ENCODE measurements at regions of chrX and their contacts with region 1.

Region 1: GRCh38 chrX:24081661-24082264 is 27.0 kb downstream of the EIF2S3 start:
- DNase-seq: peak; percentile 45 to 57 (median 56)
- ATAC-seq: peak; percentile 74 to 89 (median 82)
- H3K4me3 ChIP-seq: no peak overlapping the region
- H3K27ac ChIP-seq: no peak overlapping the region
- H3K4me1 ChIP-seq: no peaks in the 10 kb centered on the region
- H3K27me3 ChIP-seq: no peaks in the 10 kb centered on the region
- CTCF ChIP-seq: peak; percentile 10 to 49 (median 46)
- POLR2A ChIP-seq: no peak

Region 2: GRCh38 chrX:23134136-23134535 is 947.6 kb before region 1 on chrX:
- intact Hi-C with region 1: no loop called
- DNase-seq: no peak
- ATAC-seq: no peak
- H3K4me3 ChIP-seq: no peak overlapping the region
- H3K27ac ChIP-seq: no peak overlapping the region
- H3K4me1 ChIP-seq: no peaks in the 10 kb centered on the region
- H3K27me3 ChIP-seq: no peaks in the 10 kb centered on the region
- CTCF ChIP-seq: no peak
- POLR2A ChIP-seq: no peak

Region 3: GRCh38 chrX:23334848-23335599 is 746.7 kb before region 1 on chrX and contains the start of gene PTCHD1:
- intact Hi-C with region 1: no loop called
- DNase-seq: peak in 1 of 3 donors; percentile 45
- ATAC-seq: peak in 1 of 4 donors; percentile 31
- H3K4me3 ChIP-seq: peak within 1 kb of the TSS in 1 of 3 donors; percentile 9
- H3K27ac ChIP-seq: no peak within 1 kb of the TSS
- H3K4me1 ChIP-seq: no peaks in the 10 kb centered on the region
- H3K27me3 ChIP-seq: peaks cover 0 to 16% of the 10 kb centered on the region in 2 donors
- CTCF ChIP-seq: no peak
- POLR2A ChIP-seq: no peak
- total RNA-seq, gene PTCHD1: under 0.01 to 0.02 TPM in 2 of 6 experiments, not detected in the others

Region 4: GRCh38 chrX:24241822-24242648 is 160.3 kb after region 1 on chrX:
- intact Hi-C with region 1: loop called in 1 of 2 experiments (anchors 10 kb)
- DNase-seq: no peak
- ATAC-seq: peak; percentile 79 to 88 (median 87)
- H3K4me3 ChIP-seq: no peak overlapping the region
- H3K27ac ChIP-seq: no peak overlapping the region
- H3K4me1 ChIP-seq: no peaks in the 10 kb centered on the region
- H3K27me3 ChIP-seq: no peaks in the 10 kb centered on the region
- CTCF ChIP-seq: peak; percentile 47 to 60 (median 54)
- POLR2A ChIP-seq: no peak